Activated B cell treated with CpG ODN at 0.5 μM for 24 hours (primary cell): ENCODE measurements at regions of chr20 and their contacts with region 1.

Region 1: DNA sequence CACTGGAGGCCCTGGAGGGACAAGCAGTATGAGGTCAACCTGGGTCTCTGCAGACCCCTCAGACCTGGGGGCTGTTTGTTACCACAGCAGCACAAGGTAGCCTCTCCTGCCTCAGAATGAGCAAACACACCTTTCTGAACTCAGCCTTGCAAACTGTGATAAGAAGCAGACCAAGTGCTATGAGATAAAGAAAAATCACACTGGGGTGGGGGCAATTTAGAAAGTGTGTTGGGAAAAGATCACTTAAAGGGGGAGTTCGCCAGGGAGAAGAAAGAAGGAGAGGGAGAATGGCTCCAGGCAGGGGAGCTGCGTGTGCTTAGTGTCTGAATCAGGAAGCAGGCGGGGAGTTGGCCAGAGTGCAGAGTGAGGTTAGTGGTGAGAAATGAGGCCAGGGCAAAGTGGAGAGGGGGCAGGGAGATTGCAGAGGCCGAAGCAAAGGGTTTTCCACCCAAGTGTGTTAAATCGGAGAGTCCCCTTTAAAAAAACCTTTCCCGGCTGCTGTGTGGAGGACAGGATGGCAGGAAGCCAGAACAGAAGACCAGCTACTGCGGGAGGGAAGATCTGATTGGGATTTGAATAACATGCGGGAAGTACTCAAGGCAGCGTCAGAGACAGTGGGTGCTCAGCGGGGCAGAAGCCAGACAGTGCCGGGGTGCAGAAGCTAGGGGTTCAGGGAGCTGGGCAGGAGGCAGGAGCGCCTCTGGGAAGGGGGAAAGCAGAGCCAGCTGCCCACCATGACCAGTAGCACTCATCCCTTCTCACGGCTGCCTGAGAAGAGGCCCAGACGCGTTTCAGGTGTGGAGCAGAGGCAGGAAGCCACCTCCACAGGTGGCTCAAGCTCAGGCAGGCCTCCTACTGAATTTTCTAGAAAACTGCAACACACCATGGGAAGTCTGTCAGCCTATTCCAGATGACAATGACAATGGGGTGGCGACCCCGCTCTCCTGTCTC is 9.0 kb downstream of the ADA start:
- DNase-seq: no peak
- ATAC-seq: peak; percentile 15
- H3K4me3 Mint-ChIP-seq: peak overlapping the region; percentile 42
- H3K27ac Mint-ChIP-seq: peak overlapping the region; percentile 73
- H3K4me1 Mint-ChIP-seq: peaks cover 69% of the 10 kb centered on the region
- H3K27me3 Mint-ChIP-seq: no peaks in the 10 kb centered on the region
- CTCF ChIP-seq: no peak

Region 2: GRCh38 chr20:44582311-44583025 is 60.0 kb before region 1 on chr20 and contains the start of gene PKIG:
- CTCF ChIA-PET with region 1: no interaction called
- POLR2A ChIA-PET with region 1: interaction called, 32 read pairs
- intact Hi-C with region 1: loop called (anchors 2 kb)
- DNase-seq: no peak
- ATAC-seq: no peak
- H3K4me3 Mint-ChIP-seq: peak within 1 kb of the TSS; percentile 94
- H3K27ac Mint-ChIP-seq: peak within 1 kb of the TSS; percentile 96
- H3K4me1 Mint-ChIP-seq: peaks cover 79% of the 10 kb centered on the region
- H3K27me3 Mint-ChIP-seq: no peaks in the 10 kb centered on the region
- CTCF ChIP-seq: no peak
- total RNA-seq, gene PKIG: 181 and 191 TPM in 2 replicates

Region 3: DNA sequence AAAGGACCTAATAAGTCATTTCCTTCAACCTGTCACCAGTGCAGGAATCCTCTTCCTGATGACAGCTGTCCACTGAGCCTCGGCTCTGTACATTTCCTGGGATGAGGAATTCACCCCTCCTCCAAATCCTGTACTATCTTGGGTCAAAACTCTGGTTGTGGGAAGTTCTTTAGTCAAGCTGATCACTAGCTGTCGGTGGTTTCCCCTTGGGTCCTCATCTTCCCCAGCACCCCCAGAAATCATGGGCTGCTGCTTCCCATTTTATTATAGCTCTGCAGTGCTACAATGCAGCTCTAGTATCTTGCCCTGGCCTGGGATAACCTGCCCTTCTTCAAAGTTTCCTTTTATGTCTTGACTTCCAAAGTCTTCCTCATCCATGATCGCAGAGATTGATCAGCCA is 23.6 kb after region 1 on chr20:
- CTCF ChIA-PET with region 1: no interaction called
- POLR2A ChIA-PET with region 1: interaction called, 3 read pairs
- intact Hi-C with region 1: loop called (anchors 2 kb)
- DNase-seq: no peak
- ATAC-seq: no peak
- H3K4me3 Mint-ChIP-seq: no peak overlapping the region
- H3K27ac Mint-ChIP-seq: no peak overlapping the region
- H3K4me1 Mint-ChIP-seq: peaks cover 12% of the 10 kb centered on the region
- H3K27me3 Mint-ChIP-seq: no peaks in the 10 kb centered on the region
- CTCF ChIP-seq: no peak

Region 4: DNA sequence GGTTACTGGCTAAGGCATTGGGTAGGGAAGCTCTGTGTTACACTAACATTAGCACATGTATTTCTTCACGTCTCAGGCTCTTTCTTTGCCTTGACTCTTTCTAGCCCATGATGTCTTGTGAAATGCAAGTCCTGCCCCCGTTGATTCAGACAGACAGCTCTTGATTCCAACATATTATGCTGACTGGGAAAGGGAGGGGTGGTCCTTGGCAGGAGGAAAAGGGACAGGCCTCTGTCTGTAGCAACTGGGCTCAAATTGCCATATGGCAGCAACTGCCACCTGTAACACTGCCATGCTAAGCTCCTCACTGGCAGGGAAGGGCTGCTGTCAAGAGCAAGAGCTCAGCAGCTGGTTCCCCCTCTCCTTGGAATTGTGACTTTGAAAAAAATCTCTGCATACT is 97.5 kb after region 1 on chr20:
- CTCF ChIA-PET with region 1: no interaction called
- POLR2A ChIA-PET with region 1: interaction called, 13 read pairs
- intact Hi-C with region 1: no loop called
- DNase-seq: no peak
- ATAC-seq: no peak
- H3K4me3 Mint-ChIP-seq: no peak overlapping the region
- H3K27ac Mint-ChIP-seq: no peak overlapping the region
- H3K4me1 Mint-ChIP-seq: peaks cover 21% of the 10 kb centered on the region
- H3K27me3 Mint-ChIP-seq: peaks cover 6% of the 10 kb centered on the region
- CTCF ChIP-seq: no peak